HEK293T (cell line): ENCODE measurements at regions of chr2 and their contacts with region 1.

Region 1: GRCh38 chr2:134906721-134907120 is 11.9 kb upstream of the CCNT2 start:
- DNase-seq: no peak

Region 2: GRCh38 chr2:134892282-134893070 is 14.2 kb before region 1 on chr2:
- CTCF ChIA-PET with region 1: no interaction called
- POLR2A ChIA-PET with region 1: no interaction called
- DNase-seq: no peak

Region 3: GRCh38 chr2:134918526-134919340 is 12.0 kb after region 1 on chr2 and contains the start of gene CCNT2:
- CTCF ChIA-PET with region 1: interaction called, 10 read pairs
- POLR2A ChIA-PET with region 1: no interaction called
- DNase-seq: peak; percentile 97